ENCODE measurements at regions of chr14 and their contacts with region 1.

Region 1: DNA sequence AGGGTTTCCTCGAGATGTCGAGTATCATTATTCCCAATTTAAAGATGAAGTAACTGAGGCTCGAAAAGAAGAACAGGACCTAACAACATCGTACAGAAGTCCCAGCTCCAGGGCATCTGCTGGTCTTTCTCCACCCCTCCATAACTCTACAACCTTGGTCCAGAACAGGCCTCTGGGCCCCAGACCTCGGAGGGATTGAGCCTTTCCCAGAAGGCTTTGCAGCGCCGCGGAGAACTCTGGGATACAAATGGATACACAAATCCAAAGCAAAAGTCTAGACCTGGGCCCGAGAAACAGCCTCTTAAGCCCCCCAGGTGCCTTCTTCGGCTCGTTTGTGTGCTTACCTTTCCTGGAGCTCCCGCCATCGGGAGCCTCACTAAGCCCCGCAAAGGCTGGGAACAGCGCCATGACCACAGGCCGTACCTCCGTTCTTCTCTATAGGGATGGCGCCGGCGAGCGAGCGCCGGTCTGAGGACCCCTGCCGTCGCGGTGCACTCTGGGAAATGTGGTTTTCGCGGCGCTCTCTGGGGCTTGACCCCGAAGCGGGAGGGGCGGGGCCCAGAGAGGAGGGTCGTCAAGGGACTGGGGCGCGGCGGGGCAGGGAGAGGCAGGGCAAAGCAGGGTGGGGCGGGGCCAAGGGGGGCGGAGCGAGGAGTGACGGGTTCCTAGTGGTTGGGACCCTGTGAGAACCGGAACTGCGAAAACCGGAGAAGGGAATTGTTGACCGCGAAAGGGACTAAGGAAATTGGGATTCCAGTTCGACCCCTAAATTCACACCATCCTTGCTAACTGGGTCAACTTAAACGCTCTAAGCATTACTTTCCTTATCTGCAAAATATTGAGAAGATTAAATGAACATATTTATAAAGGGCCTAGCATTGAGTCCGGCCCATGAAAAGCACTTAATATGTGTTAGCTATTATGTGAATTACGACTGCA is at the start of gene NRDE2:
- DNase-seq: peak; percentile 90
- H3K4me3 Mint-ChIP-seq: peak within 1 kb of the TSS; percentile 93
- H3K27ac Mint-ChIP-seq: peak within 1 kb of the TSS; percentile 88
- H3K4me1 Mint-ChIP-seq: peaks cover 26% of the 10 kb centered on the region
- H3K27me3 Mint-ChIP-seq: peaks cover 24% of the 10 kb centered on the region
- total RNA-seq, gene NRDE2: 22.9 and 24.4 TPM in 2 replicates

Region 2: GRCh38 chr14:89669193-89669592 is 662.6 kb before region 1 on chr14:
- intact Hi-C with region 1: no loop called
- DNase-seq: peak; percentile 5
- H3K4me3 Mint-ChIP-seq: no peak overlapping the region
- H3K27ac Mint-ChIP-seq: peak overlapping the region; percentile 28
- H3K4me1 Mint-ChIP-seq: peaks cover 30% of the 10 kb centered on the region
- H3K27me3 Mint-ChIP-seq: no peaks in the 10 kb centered on the region

Region 3: DNA sequence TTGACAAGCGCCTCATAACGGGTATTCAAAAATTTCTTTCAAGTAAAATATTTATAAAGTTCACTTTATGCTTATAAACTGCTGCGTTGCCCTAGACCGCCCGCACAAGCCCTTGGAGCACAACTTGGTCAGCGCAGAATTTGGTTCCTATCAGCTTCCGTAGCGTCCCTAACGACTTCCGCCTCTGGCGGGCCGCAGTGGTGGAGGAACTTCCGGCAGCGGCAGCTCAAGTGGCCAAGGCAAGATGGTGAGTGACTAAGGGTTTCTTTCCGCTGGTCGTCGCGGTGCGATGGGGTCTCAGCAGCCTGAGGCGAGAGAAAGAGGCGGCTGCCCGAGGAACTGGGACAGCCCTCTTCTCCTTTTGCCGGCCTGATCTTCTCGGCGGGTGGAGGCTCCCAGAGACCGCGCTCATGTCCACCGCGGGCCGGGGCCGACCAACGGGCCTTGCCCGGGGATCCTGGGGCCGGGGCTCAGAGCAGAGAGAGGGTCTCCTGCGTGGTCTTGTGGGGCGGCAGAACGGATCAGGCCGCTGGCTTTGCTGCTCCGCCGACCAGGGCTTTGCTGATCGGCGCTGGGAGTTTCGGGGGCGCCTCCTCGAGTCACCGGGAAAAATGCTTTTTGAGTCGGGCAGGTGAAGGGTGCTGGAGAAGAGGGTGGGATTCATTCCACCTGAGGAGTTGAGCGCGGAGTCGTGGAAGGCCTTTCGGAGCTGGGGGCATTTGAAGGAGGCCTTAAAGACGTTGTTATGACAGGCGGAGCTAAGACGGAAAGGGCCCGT is 75.2 kb before region 1 on chr14 and contains the start of gene PSMC1:
- intact Hi-C with region 1: loop called (anchors 1 kb)
- DNase-seq: peak; percentile 83
- H3K4me3 Mint-ChIP-seq: peak within 1 kb of the TSS; percentile 99
- H3K27ac Mint-ChIP-seq: peak within 1 kb of the TSS; percentile 93
- H3K4me1 Mint-ChIP-seq: peaks cover 22% of the 10 kb centered on the region
- H3K27me3 Mint-ChIP-seq: peaks cover 6% of the 10 kb centered on the region
- total RNA-seq, gene PSMC1: 171 and 176 TPM in 2 replicates

Region 4: DNA sequence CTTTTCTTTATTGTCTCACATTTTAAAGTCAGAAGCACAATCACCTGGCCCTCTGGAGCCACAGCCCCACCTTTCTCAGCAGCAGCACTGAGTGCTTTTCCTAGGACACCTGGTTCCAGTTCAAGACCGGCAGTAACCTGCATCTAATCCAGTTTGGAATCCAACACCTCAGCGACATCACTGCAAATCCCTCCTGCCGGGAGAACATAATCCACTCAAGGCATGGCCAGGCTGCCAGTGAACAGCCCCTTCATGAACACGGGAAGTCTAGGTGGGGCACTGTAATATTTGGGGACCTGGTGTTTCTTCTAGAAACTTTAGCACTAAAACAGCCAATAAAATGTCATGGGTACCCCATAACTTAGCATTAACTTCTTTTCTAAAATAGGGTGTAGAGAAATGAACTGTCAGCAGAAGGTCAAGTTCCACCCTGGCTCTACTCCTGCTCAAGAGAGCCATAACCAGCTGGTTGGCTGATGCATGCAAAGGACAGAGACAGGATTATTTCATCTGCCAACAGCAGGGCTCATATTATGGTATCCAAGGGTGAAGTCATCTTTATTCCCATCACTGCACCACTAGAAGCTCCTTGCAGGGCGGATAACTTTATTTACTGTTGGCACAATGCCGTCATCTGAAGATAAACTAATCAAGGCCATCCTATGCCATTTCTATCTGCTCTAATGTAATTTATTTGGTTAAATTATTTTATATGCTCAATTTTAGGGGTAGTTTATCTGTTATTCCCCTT is 407.7 kb after region 1 on chr14:
- intact Hi-C with region 1: no loop called
- DNase-seq: no peak
- H3K4me3 Mint-ChIP-seq: no peak overlapping the region
- H3K27ac Mint-ChIP-seq: no peak overlapping the region
- H3K4me1 Mint-ChIP-seq: no peaks in the 10 kb centered on the region
- H3K27me3 Mint-ChIP-seq: peaks cover 5% of the 10 kb centered on the region

Region 5: GRCh38 chr14:90827916-90828610 is 496.3 kb after region 1 on chr14:
- intact Hi-C with region 1: loop called (anchors 5 kb)
- DNase-seq: peak; percentile 91
- H3K4me3 Mint-ChIP-seq: peak overlapping the region; percentile 76
- H3K27ac Mint-ChIP-seq: peak overlapping the region; percentile 88
- H3K4me1 Mint-ChIP-seq: peaks cover 28% of the 10 kb centered on the region
- H3K27me3 Mint-ChIP-seq: peaks cover 5% of the 10 kb centered on the region

Measured in activated T-helper 1 cell treated with anti-CD3 and anti-CD28 coated beads, Interleukin-12 subunit alpha, Interleukin-12 subunit beta, Interleukin-2, Interleukin-4 antibody, amounts not matched to agents 30 ng/mL and 10 ng/mL and 1 ng/mL, durations not matched to agents 14 hours and 24 hours and 36 hours (primary cell).